ENCODE measurements at regions of chr16 and their contacts with region 1.

Region 1: DNA sequence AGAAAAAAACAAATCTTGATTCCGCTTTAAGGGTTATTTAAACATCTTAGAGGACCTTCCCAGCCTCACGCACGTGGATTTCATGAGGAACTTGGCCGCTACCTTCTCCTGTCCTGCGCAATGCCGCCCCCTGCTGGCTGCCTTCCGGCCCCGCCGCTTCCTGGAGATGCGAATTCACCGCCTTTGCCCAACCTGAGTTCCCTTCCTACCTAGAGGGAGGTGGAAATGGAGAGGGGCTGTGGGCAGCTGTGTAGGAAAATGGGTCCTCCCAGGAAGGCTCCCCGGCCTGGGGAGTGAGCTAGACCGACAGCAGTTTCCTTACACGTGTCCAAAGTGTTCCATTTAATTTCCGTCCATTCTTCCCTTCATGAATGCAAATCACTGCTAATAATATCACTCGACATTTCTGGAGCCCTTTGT is 1.0 kb upstream of the ABCC12 start:
- DNase-seq: peak; percentile 84 to 90 (median 86)
- ATAC-seq: peak; percentile 79 to 94 (median 84)
- H3K4me3 ChIP-seq: peak overlapping the region in 4 of 12 donors; percentile 10 to 30 (median 24)
- H3K27ac ChIP-seq: peak overlapping the region in 6 of 12 donors; percentile 45 to 64 (median 49)
- H3K4me1 ChIP-seq: peaks cover 0 to 17% (median 6%) of the 10 kb centered on the region in 12 donors
- H3K27me3 ChIP-seq: peaks cover 0 to 3% (median 0%) of the 10 kb centered on the region in 9 donors
- CTCF ChIP-seq: peak; percentile 94 to 99 (median 96)
- POLR2A ChIP-seq: no peak

Region 2: GRCh38 chr16:46947900-46948547 is 1208.8 kb before region 1 on chr16:
- intact Hi-C with region 1: loop called in 7 of 10 experiments (anchors 5 to 10 kb)
- DNase-seq: no peak
- ATAC-seq: peak in 1 of 4 donors; percentile 36
- H3K4me3 ChIP-seq: no peak overlapping the region
- H3K27ac ChIP-seq: no peak overlapping the region
- H3K4me1 ChIP-seq: no peaks in the 10 kb centered on the region
- H3K27me3 ChIP-seq: no peaks in the 10 kb centered on the region
- CTCF ChIP-seq: peak in 11 of 12 donors; percentile 19 to 53 (median 38)
- POLR2A ChIP-seq: no peak

Region 3: GRCh38 chr16:47037746-47038458 is 1118.9 kb before region 1 on chr16:
- intact Hi-C with region 1: loop called in 8 of 10 experiments (anchors 5 to 10 kb)
- DNase-seq: peak; percentile 89 to 95 (median 90)
- ATAC-seq: peak; percentile 85 to 99 (median 98)
- H3K4me3 ChIP-seq: peak overlapping the region; percentile 60 to 78 (median 66)
- H3K27ac ChIP-seq: peak overlapping the region in 6 of 12 donors; percentile 29 to 68 (median 50)
- H3K4me1 ChIP-seq: peaks cover 0 to 12% (median 3%) of the 10 kb centered on the region in 12 donors
- H3K27me3 ChIP-seq: no peaks in the 10 kb centered on the region
- CTCF ChIP-seq: peak; percentile 87 to 98 (median 94)
- POLR2A ChIP-seq: no peak

Region 4: DNA sequence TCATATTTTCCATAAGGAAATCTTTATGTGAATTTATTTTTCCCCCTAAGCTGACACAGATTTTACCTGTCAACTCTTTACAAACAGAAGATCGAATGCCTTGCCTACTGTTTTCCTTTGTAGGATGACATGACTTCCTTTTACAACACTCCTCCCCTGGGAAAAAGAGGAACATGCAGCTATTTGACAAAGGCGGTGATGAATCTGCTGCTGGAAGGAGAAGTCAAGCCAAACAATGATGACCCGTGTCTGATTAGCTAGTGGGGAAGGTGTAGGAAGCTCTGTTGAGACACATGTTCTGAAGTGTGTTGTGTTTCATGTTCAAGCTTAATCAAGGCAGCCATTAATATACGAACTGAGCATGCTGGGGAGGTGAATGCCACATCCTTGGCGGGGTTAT is 457.7 kb before region 1 on chr16:
- intact Hi-C with region 1: loop called in 2 of 10 experiments (anchors 10 kb)
- DNase-seq: no peak
- ATAC-seq: no peak
- H3K4me3 ChIP-seq: no peak overlapping the region
- H3K27ac ChIP-seq: no peak overlapping the region
- H3K4me1 ChIP-seq: no peaks in the 10 kb centered on the region
- H3K27me3 ChIP-seq: no peaks in the 10 kb centered on the region
- CTCF ChIP-seq: no peak
- POLR2A ChIP-seq: no peak

Region 5: DNA sequence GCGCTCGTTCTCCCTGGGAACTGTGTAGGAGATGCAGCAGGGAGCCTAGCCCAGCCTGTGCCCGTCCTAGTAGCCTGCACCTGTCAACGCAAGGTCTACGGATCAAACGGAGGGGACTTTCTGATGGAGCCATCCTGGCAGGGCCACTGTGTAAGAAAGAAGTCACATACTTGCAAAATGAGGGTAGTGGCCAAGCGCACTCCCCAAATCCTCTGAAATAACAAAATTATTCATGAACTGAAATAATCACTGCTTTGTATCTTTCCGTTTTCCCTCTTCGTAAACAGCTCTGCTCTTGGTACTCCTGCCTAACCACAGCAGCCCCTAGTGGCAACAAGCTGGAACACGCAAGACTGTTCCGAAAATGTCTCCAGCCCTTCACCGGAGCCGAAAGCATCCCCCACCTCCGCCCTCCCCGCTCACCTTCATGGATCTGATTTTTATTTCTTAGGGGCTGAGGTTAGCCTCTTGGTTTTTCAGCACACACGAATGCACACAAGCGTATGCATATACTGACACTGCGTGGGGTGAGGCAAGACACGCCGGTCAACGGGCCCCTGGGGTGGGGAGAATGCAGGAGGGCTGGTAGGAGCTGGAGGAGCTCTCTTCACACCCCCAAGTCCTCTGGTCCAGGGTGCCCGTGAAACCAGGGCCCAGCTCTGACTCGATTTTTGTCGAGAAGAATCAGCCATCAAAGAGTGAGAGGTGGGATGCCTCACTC is 101.8 kb before region 1 on chr16:
- intact Hi-C with region 1: loop called in 1 of 10 experiments (anchors 5 kb)
- DNase-seq: peak in 4 of 5 donors; percentile 28 to 40 (median 34)
- ATAC-seq: peak in 3 of 4 donors; percentile 64 to 85 (median 68)
- H3K4me3 ChIP-seq: peak overlapping the region in 3 of 12 donors; percentile 9 to 23 (median 15)
- H3K27ac ChIP-seq: no peak overlapping the region
- H3K4me1 ChIP-seq: peaks cover 0 to 23% (median 4%) of the 10 kb centered on the region in 12 donors
- H3K27me3 ChIP-seq: peaks cover 0 to 3% (median 0%) of the 10 kb centered on the region in 9 donors
- CTCF ChIP-seq: peak; percentile 65 to 82 (median 78)
- POLR2A ChIP-seq: no peak